ENCODE measurements at regions of chr17 and their contacts with region 1.

Region 1: DNA sequence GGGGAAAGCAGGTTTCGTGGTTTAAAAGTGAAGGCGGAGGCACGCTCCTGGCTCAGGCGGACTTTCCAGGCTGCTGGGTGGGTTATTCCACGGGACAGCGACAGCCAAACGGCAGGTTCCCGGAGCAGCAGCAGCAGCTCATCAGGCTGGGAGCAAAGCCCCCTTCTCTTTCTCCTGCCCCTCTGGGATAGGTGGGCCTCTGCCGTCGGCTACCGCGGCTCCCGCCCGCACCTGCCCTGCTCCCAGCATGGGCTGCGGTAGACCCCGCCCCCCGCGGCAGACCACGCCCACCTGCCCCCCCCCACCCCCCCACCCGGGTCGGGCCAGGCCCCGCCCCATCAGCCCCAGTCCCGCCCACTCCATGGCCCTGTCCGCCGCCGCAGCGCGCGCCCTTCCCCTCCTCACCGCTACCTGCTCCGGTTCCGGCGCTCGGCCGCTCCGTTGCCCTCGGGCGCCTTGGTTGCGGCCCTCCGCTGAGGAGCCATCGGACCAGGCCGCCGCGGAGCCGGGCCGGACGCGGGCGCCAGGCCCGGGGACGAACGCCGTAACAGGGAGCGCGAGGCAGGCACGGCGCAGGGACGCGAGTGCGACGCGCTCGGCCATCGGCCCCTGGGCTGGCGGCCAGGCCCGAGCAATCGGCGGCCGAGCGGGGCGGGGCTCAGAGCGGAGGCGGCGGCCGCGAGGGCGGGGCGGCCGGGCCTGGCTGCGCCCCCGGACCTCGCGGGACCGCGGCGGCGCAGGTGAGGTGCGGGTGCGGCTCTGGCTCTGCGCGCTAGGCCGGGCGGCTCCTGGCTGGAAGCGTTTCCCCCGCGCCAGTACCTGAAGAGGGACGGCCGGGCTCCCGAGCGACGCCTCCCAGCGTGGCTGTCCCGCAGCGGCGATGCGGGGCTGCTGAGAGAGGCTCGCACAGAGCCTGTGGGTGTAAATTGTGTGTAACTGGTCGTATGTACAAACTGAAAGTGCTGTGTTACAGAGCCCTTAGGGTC is at the starts of genes HEXD and OGFOD3:
- DNase-seq: peak; percentile 91
- ATAC-seq: peak; percentile 82
- H3K4me3 ChIP-seq: peak within 1 kb of the TSS; percentile 97
- H3K27ac ChIP-seq: peak within 1 kb of the TSS; percentile 42; the same call in 1 of the 2 replicates
- H3K4me1 ChIP-seq: peaks cover 11% of the 10 kb centered on the region
- H3K27me3 ChIP-seq: no peaks in the 10 kb centered on the region
- CTCF ChIP-seq: no peak
- total RNA-seq, gene HEXD: 12.7 and 18.3 TPM in 2 replicates
- total RNA-seq, gene OGFOD3: 56.1 and 79.2 TPM in 2 replicates

Region 2: GRCh38 chr17:82450170-82451106 is 32.1 kb after region 1 on chr17 and contains the start of gene CYBC1:
- CTCF ChIA-PET with region 1: no interaction called
- POLR2A ChIA-PET with region 1: no interaction called
- intact Hi-C with region 1: no loop called
- DNase-seq: peak; percentile 91
- ATAC-seq: peak; percentile 97
- H3K4me3 ChIP-seq: peak within 1 kb of the TSS; percentile 87
- H3K27ac ChIP-seq: peak within 1 kb of the TSS; percentile 28
- H3K4me1 ChIP-seq: peaks cover 14% of the 10 kb centered on the region
- H3K27me3 ChIP-seq: no peaks in the 10 kb centered on the region
- CTCF ChIP-seq: no peak
- total RNA-seq, gene CYBC1: 63.6 and 77.2 TPM in 2 replicates

Region 3: DNA sequence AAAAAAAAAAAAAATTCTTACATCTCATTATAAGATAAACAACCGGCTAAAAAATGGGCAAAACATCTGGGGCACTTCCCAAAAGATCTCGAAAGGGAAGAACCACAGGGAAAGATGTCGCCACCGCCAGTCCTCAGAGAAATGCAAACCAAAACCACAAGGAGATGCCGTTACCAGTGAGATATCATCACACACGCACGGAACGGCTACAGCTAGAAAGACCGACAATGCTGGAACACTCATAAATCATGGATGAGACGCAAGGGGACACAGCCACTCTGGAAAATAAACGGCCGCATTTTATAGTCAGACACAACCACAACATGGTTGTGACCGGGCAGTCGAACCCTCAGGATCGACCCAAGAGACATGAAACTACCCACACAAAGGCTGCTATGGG is 205.4 kb after region 1 on chr17:
- CTCF ChIA-PET with region 1: no interaction called
- POLR2A ChIA-PET with region 1: interaction called, 11 read pairs
- intact Hi-C with region 1: no loop called
- DNase-seq: no peak
- ATAC-seq: no peak
- H3K4me3 ChIP-seq: no peak overlapping the region
- H3K27ac ChIP-seq: no peak overlapping the region
- H3K4me1 ChIP-seq: no peaks in the 10 kb centered on the region
- H3K27me3 ChIP-seq: no peaks in the 10 kb centered on the region
- CTCF ChIP-seq: no peak